PC-3 (cell line): ENCODE measurements at regions of chr5 and their contacts with region 1.

Region 1: GRCh38 chr5:91383027-91383955 is at the start of gene ARRDC3:
- DNase-seq: peak; percentile 98
- ATAC-seq: peak; percentile 48
- H3K4me3 ChIP-seq: peak within 1 kb of the TSS; percentile 85
- H3K27ac ChIP-seq: peak within 1 kb of the TSS; percentile 90
- H3K4me1 ChIP-seq: peaks cover 15% of the 10 kb centered on the region
- H3K27me3 ChIP-seq: no peaks in the 10 kb centered on the region
- CTCF ChIP-seq: no peak
- total RNA-seq, gene ARRDC3: 39.5 and 40.3 TPM in 2 replicates

Region 2: GRCh38 chr5:90171466-90171865 is 1211.8 kb before region 1 on chr5:
- CTCF ChIA-PET with region 1: no interaction called
- POLR2A ChIA-PET with region 1: interaction called, 11 read pairs
- intact Hi-C with region 1: no loop called
- DNase-seq: no peak
- ATAC-seq: no peak
- H3K4me3 ChIP-seq: no peak overlapping the region
- H3K27ac ChIP-seq: no peak overlapping the region
- H3K4me1 ChIP-seq: peaks cover 23% of the 10 kb centered on the region
- H3K27me3 ChIP-seq: no peaks in the 10 kb centered on the region
- CTCF ChIP-seq: no peak

Region 3: GRCh38 chr5:90932052-90932699 is 451.1 kb before region 1 on chr5:
- CTCF ChIA-PET with region 1: interaction called, 9 read pairs
- POLR2A ChIA-PET with region 1: interaction called, 17 read pairs
- intact Hi-C with region 1: loop called (anchors 1 kb)
- DNase-seq: peak; percentile 93
- ATAC-seq: peak; percentile 80
- H3K4me3 ChIP-seq: no peak overlapping the region
- H3K27ac ChIP-seq: peak overlapping the region; percentile 20
- H3K4me1 ChIP-seq: peaks cover 24% of the 10 kb centered on the region
- H3K27me3 ChIP-seq: no peaks in the 10 kb centered on the region
- CTCF ChIP-seq: peak; percentile 94

Region 4: DNA sequence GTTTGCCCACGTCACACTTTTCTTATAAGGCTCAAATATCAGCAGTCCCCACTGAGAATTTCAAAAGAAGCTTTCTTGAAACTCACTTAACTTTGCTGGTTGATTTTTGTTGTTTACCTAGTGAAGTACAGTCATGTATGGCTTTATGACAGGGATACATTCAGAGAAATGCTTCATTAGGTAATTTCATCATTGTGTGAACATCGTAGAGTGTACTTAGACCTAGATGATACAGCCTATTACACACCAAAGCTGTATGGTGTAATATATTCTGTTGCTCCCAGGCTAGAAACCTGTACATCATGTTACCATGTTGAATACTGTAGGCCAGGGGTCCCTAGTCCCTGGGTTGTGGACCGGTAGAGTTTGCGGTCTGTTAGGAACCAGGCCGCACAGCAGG is 177.2 kb before region 1 on chr5:
- CTCF ChIA-PET with region 1: interaction called, 4 read pairs
- POLR2A ChIA-PET with region 1: interaction called, 19 read pairs
- intact Hi-C with region 1: no loop called
- DNase-seq: peak; percentile 48
- ATAC-seq: peak; percentile 57
- H3K4me3 ChIP-seq: no peak overlapping the region
- H3K27ac ChIP-seq: peak overlapping the region; percentile 20; the same call in 1 of the 2 replicates
- H3K4me1 ChIP-seq: peaks cover 5% of the 10 kb centered on the region; the same call in 1 of the 2 replicates
- H3K27me3 ChIP-seq: no peaks in the 10 kb centered on the region
- CTCF ChIP-seq: no peak

Region 5: GRCh38 chr5:91245871-91246270 is 137.4 kb before region 1 on chr5:
- CTCF ChIA-PET with region 1: interaction called, 4 read pairs
- POLR2A ChIA-PET with region 1: no interaction called
- intact Hi-C with region 1: loop called (anchors 1 kb)
- DNase-seq: no peak
- ATAC-seq: no peak
- H3K4me3 ChIP-seq: no peak overlapping the region
- H3K27ac ChIP-seq: no peak overlapping the region
- H3K4me1 ChIP-seq: no peaks in the 10 kb centered on the region
- H3K27me3 ChIP-seq: no peaks in the 10 kb centered on the region
- CTCF ChIP-seq: no peak; the same call in 1 of the 2 replicates

Region 6: DNA sequence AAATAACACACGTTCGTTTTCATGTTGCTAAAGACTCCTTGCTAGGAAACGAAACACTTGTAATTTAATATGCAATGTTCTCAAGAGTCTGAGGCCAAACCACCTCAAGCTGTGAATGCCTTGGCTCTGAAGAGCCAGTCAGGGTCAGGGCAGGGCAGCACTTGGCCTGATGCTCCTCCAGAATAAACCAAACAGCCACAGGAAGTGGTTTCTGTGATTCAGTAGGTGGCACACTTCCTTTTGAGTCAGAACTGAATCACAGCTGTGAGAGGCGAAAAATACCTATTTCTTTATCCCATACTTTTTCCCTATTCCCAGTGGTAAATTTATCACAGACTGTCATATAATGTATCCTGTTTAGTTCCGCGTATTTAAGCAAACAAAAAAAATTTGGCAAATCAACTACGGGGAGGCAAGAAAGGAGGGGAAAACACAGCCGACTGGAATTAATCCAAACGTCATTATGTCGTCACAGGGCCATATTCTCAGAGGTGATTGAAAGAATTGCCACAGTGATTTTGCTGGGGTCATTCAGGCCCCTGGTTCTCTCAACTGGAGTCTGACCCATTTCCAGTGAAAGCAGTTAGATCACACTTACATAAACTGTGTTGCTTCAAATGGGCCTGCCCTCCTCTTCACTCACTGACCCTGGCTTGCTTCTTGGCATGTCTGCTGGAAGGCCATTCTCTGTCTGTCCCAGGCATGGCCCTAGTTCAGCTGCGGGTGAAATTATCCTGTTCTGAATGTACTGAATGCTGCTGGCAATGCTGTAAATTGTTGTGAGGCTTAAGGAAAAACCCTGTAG is 71.4 kb before region 1 on chr5:
- CTCF ChIA-PET with region 1: no interaction called
- POLR2A ChIA-PET with region 1: interaction called, 21 read pairs
- intact Hi-C with region 1: loop called (anchors 1 kb)
- DNase-seq: peak; percentile 94
- ATAC-seq: peak; percentile 87
- H3K4me3 ChIP-seq: peak overlapping the region; percentile 17; the same call in 1 of the 2 replicates
- H3K27ac ChIP-seq: peak overlapping the region; percentile 98
- H3K4me1 ChIP-seq: peaks cover 39% of the 10 kb centered on the region
- H3K27me3 ChIP-seq: no peaks in the 10 kb centered on the region
- CTCF ChIP-seq: no peak

Region 7: DNA sequence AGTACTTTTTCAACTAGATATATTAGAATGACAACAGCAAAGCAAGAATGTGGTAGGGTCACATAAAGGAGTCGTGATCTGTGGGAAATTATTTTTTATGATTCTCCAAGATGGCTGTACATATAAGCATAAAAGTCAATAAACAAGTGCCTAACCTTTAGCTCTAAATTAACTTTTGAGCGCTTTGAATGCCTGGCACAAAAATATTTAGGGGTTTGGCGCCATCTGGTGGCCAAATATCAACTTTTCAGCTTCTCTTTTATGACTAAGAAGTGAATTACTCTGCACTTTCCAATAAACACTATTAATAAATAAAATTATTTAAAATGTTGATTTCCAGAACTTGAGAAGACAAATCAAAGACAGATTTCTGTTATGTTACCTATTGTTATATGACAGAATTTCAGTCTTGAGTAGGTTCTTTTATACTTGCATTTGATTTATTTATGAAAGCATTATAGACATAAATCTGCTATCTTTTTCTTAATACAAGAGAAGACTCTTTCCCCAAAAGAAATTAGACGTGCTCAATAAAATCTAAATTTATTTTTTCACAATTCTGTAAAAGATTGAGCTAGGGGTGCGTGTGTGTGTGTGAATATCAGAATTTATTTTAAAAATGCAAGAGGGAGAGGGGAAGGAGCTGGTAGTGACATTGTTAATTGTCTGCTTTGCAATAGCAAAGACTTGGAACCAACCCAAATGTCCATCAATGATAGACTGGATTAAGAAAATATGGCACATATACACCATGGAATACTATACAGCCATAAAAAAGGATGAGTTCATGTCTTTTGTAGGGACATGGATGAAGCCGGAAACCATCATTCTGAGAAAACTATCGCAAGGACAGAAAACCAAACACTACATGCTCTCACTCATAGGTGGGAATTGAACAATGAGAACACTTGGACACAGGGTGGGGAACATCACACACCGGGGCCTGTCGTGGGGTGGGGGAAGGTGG is 36.6 kb after region 1 on chr5:
- CTCF ChIA-PET with region 1: interaction called, 39 read pairs
- POLR2A ChIA-PET with region 1: interaction called, 5 read pairs
- intact Hi-C with region 1: loop called (anchors 1 kb)
- DNase-seq: peak; percentile 88
- ATAC-seq: peak; percentile 48
- H3K4me3 ChIP-seq: no peak overlapping the region
- H3K27ac ChIP-seq: no peak overlapping the region
- H3K4me1 ChIP-seq: no peaks in the 10 kb centered on the region
- H3K27me3 ChIP-seq: no peaks in the 10 kb centered on the region
- CTCF ChIP-seq: peak; percentile 85